Dendritic cell treated with granulocyte-macrophage colony-stimulating factor and Interleukin-4, amounts not matched to agents 40 ng/mL and 50 ng/mL, for 4 days (primary cell): ENCODE measurements at regions of chr13 and their contacts with region 1.

Region 1: DNA sequence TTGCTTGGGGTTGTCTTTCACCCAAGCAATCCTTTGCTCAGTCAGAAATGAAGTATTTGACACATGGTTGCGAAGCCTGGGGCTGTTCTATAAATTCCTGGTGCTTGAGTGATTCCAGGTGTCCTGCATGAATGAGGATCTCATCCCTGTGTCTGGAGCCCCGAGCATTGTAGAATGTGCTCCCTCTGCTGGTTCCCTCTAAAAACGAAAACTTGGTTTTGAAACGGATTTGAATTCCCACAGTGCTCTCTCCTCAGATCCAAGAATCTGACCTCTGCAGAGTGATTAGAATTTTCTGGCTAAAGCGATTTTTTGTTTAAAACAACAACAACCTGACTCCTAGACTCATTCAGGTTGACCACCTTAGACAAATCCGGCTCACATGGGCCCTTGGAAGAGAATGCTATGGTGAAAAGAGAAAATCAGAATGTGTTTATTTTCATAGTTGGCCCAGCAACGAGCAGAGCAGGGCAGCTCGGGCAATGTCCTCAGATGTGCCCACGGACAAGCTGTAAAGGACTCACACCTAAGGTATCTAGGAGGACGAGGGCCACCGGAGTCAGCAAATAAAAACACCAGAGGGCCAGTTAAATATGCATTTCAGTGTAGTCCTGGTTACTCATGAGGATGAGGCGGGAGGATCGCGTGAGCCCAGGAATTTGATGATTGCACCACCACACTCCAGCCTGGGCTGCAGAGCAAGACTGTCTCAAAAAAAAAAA is 8.7 kb upstream of the ATP12A start:
- H3K4me3 Mint-ChIP-seq: no peak overlapping the region
- H3K27ac Mint-ChIP-seq: no peak overlapping the region
- H3K4me1 Mint-ChIP-seq: peaks cover 19% of the 10 kb centered on the region
- H3K27me3 Mint-ChIP-seq: peaks cover 6% of the 10 kb centered on the region

Region 2: GRCh38 chr13:24574847-24575246 is 96.7 kb before region 1 on chr13:
- intact Hi-C with region 1: loop called (anchors 1 kb)
- H3K4me3 Mint-ChIP-seq: no peak overlapping the region
- H3K27ac Mint-ChIP-seq: peak overlapping the region; percentile 22
- H3K4me1 Mint-ChIP-seq: peaks cover 22% of the 10 kb centered on the region
- H3K27me3 Mint-ChIP-seq: peaks cover 3% of the 10 kb centered on the region

Region 3: DNA sequence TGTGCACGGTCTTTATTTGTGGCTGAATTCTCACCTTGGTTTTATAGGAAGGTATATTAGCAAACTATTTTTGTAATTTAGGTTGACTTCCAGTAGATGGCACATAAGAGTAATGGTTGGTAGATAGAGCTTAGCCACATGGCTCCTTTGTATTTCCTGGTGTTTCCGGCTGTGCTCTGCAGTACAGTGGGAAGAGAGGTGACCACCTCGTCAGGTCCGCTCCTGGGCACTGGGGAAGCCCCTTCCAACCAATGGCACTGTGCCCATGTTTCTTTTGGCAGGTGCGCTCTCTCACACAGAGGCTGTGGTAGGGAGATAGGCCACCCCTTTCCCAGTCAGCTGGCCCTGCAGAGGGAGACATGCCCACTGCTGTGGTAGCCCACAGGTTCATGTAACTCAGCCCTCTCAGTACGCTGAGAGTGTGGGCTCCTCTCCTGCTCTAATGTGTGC is 65.6 kb before region 1 on chr13:
- intact Hi-C with region 1: loop called (anchors 1 kb)
- H3K4me3 Mint-ChIP-seq: no peak overlapping the region
- H3K27ac Mint-ChIP-seq: no peak overlapping the region
- H3K4me1 Mint-ChIP-seq: peaks cover 7% of the 10 kb centered on the region
- H3K27me3 Mint-ChIP-seq: no peaks in the 10 kb centered on the region

Region 4: DNA sequence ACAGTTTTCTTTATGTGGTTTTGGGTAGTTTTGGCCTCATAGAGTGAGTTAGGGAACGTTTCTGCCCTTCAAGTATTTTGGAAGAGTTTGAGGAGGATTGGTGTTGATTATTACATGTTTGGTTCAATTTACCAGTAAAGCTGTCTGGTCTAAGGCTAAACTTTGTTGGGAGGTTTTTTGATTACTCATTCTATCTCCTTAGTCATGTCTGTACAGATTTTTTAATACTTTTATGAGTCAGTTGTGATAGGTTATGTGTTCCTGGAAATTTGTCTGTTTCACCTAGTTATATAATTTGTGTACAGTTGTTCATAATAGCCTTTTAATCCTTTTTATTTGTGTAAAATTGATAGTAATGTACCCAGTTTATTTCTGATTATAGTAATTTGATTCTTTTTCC is 112.8 kb after region 1 on chr13:
- intact Hi-C with region 1: no loop called
- H3K4me3 Mint-ChIP-seq: no peak overlapping the region
- H3K27ac Mint-ChIP-seq: no peak overlapping the region
- H3K4me1 Mint-ChIP-seq: no peaks in the 10 kb centered on the region
- H3K27me3 Mint-ChIP-seq: no peaks in the 10 kb centered on the region